K562 (cell line): ENCODE measurements at regions of chr1 and their contacts with region 1.

Region 1: DNA sequence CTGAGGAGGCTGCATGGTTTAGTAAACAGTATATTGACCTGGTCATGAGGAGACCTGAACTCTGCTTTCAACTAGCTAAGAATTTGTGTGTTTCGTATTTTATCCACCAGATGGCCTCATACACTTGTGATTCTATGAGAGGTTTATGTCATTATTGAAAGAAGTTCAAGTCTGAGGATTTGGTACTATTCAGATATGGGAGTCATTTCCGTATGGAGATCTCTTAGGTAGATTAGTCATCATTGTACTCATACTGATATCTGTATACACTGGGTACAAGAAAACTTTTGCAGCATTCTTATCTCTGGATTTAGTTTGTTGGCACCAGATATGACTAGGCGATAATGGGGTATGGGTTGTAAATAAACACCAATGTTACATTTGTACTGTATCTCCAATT is 26.6 kb downstream of the ATF6 start:
- DNase-seq: peak; percentile 32 to 52 (median 50)
- ATAC-seq: peak; percentile 87
- H3K4me3 ChIP-seq: no peak overlapping the region
- H3K27ac ChIP-seq: no peak overlapping the region
- H3K4me1 ChIP-seq: no peaks in the 10 kb centered on the region; a peak in 1 of 5 replicates
- H3K27me3 ChIP-seq: no peaks in the 10 kb centered on the region
- CTCF ChIP-seq: peak in 2 of 3 experiments; percentile 46 to 67; a peak in 4 of 6 replicates
- EP300 ChIP-seq: no peak
- POLR2A ChIP-seq: no peak
- RAD21 ChIP-seq: peak; percentile 63 to 64

Region 2: GRCh38 chr1:161905269-161905884 is 112.6 kb after region 1 on chr1:
- CTCF ChIA-PET with region 1: no interaction called
- POLR2A ChIA-PET with region 1: no interaction called
- in situ Hi-C with region 1: no loop called
- intact Hi-C with region 1: loop called (anchors 5 kb)
- DNase-seq: peak; percentile 40 to 53 (median 46)
- ATAC-seq: peak; percentile 97
- H3K4me3 ChIP-seq: no peak overlapping the region
- H3K27ac ChIP-seq: no peak overlapping the region
- H3K4me1 ChIP-seq: no peaks in the 10 kb centered on the region
- H3K27me3 ChIP-seq: no peaks in the 10 kb centered on the region
- CTCF ChIP-seq: peak; percentile 51 to 60 (median 52); a peak in 5 of 6 replicates
- EP300 ChIP-seq: no peak
- POLR2A ChIP-seq: no peak
- RAD21 ChIP-seq: peak; percentile 24 to 38; a peak in 2 of 4 replicates

Region 3: DNA sequence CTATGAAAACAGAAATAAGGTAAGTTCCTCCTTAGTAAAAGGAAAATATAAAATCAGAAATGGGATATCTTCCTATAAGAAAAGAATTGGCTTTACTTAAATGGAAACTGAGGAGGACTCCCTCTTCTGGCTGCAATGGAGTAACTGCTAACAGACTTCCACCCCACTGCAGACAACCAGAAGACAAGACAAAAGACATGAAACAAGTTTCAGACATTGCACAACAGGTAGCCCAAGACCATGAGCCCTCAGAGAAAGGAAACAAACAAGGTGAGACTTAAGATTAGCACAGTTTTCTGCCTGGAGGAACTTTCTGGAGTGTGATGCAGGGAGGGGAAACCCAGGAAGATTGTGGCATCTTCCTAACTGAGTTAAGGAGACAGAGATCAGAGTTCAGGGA is 247.9 kb after region 1 on chr1:
- CTCF ChIA-PET with region 1: interaction called, 14 read pairs
- POLR2A ChIA-PET with region 1: interaction called, 7 read pairs
- in situ Hi-C with region 1: loop called (anchors 10 kb)
- intact Hi-C with region 1: loop called (anchors 1 kb)
- DNase-seq: peak in 2 of 4 experiments; percentile 13 to 18
- ATAC-seq: peak; percentile 66
- H3K4me3 ChIP-seq: no peak overlapping the region
- H3K27ac ChIP-seq: no peak overlapping the region
- H3K4me1 ChIP-seq: no peaks in the 10 kb centered on the region
- H3K27me3 ChIP-seq: no peaks in the 10 kb centered on the region
- CTCF ChIP-seq: peak; percentile 43 to 49 (median 45); a peak in 4 of 6 replicates
- EP300 ChIP-seq: no peak
- POLR2A ChIP-seq: no peak
- RAD21 ChIP-seq: peak in 1 of 2 experiments; percentile 25; a peak in 2 of 4 replicates